ENCODE measurements at regions of chr18 and their contacts with region 1.

Region 1: GRCh38 chr18:38087538-38087937 is 521.9 kb upstream of the CELF4 start:
- DNase-seq: no peak

Region 2: GRCh38 chr18:38010971-38011857 is 76.3 kb before region 1 on chr18:
- intact Hi-C with region 1: loop called in 1 of 2 experiments (anchors 10 kb)
- DNase-seq: no peak

Region 3: GRCh38 chr18:38033282-38033681 is 54.3 kb before region 1 on chr18:
- intact Hi-C with region 1: no loop called
- DNase-seq: no peak

Region 4: GRCh38 chr18:38993342-38993741 is 905.8 kb after region 1 on chr18:
- intact Hi-C with region 1: no loop called
- DNase-seq: no peak

Measured in posterior vena cava (tissue), 2 donors.